A673 (cell line): ENCODE measurements at regions of chr5 and their contacts with region 1.

Region 1: DNA sequence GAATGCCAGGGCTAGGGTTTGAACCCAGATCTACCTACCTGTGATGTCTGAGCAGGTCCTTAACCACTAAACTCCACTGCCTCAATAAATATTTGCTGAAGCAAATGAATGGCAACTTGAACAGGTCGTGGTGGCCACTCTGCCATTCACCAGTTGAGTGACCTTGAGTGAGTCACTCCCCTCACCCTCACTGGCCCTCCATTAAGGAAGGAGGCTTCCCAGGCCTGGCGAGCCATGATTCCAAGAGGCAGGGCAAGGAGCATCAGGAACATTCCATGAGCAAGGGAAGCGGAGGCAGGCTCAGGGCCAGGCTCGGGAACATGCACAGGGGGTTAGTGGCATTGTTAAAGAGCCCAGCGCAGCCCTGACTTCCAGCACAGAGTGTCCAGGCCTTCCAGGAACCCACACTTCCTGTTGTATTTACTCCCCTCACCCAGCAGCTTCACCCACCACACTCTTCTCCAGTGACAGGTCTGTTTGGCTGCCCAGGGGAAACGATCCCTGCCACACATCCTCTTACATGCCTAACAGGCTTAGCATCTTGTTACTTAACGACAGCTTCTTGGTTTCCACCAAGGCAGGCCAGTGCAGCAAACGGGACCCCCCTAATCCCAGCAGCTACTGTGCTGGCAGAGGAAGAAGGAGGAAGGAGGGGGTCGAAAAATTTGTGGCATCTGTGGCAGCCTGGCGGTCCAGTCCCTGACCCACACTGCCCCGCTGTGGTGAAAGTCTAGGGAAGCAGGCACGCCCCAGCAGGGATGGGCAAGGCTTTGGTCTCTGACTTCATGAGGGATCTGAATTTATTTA is 43.7 kb upstream of the TTC1 start:
- DNase-seq: peak; percentile 62
- H3K4me3 ChIP-seq: no peak overlapping the region
- H3K27ac ChIP-seq: no peak overlapping the region
- H3K4me1 ChIP-seq: no peaks in the 10 kb centered on the region
- H3K27me3 ChIP-seq: peaks cover 7% of the 10 kb centered on the region
- CTCF ChIP-seq: peak; percentile 61

Region 2: DNA sequence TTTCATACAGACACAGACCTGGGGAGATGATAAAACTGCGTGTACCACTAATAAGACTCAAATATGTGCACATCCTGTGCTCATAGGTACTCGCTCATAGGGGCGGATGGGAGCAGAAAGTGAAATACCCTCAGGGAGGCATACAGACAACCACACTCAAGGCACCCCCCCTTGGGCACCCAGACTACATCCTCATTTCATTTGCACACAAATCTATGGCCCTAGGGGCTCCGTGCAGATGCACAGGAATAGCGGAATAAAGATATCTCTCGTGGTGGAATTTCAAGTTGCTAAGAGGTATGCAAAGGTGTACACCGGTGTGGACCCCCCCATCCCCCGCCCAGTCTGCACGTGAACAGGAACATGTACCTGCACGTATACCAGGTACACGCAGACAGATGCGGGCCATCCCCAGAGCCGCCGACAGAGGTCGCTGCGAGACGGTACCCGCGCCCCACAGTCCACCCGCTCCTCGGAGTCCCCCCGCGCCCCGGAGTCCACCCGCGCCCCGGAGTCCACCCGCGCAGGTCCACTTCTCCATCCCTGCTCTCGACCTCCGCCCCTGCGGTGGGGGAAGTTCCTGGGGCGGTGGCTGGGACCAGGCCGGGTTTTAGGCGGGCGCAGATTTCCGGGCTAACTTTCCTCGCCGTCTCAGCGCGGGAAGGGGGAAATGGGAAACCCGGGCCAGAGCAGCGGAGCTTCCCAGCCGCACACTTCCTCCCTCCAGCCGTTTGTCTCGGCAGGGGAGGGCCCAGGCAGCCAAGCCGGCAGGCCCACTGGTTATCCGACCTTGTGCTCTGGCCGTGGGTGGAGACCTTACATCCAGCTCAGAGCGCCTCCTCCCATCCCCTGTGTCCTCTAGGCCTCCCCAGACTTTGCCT is 633.9 kb before region 1 on chr5:
- CTCF ChIA-PET with region 1: no interaction called
- POLR2A ChIA-PET with region 1: no interaction called
- intact Hi-C with region 1: loop called (anchors 10 kb)
- DNase-seq: peak; percentile 27
- H3K4me3 ChIP-seq: peak overlapping the region; percentile 48
- H3K27ac ChIP-seq: no peak overlapping the region
- H3K4me1 ChIP-seq: no peaks in the 10 kb centered on the region
- H3K27me3 ChIP-seq: peaks cover 6% of the 10 kb centered on the region
- CTCF ChIP-seq: peak; percentile 85

Region 3: GRCh38 chr5:159628703-159629102 is 336.5 kb before region 1 on chr5:
- CTCF ChIA-PET with region 1: no interaction called
- POLR2A ChIA-PET with region 1: no interaction called
- intact Hi-C with region 1: no loop called
- DNase-seq: no peak
- H3K4me3 ChIP-seq: no peak overlapping the region
- H3K27ac ChIP-seq: no peak overlapping the region
- H3K4me1 ChIP-seq: no peaks in the 10 kb centered on the region
- H3K27me3 ChIP-seq: no peaks in the 10 kb centered on the region
- CTCF ChIP-seq: no peak